ENCODE measurements at regions of chr3 and their contacts with region 1.

Region 1: DNA sequence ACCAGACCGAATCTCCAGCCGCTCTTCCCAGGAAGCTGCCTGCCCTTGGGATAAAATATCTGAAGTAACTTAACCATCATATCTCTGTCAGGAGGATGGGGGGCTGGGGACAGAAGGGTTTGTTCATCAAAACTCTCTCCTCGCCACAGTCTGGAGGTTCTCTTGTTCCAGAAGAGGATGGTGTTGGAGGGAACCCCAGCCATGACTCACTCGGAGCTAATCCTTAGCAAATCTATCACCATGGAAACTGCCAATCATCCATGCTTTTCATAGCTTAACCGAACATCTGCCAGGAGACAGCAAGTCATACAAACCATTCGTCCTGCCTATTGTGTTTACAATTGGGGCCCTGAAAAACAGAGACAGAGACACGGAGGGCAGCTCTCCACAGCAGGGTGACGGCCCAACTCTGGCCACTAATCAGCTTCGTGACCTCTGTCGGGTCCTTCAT is 73.7 kb upstream of the HEG1 start:
- DNase-seq: peak; percentile 29 to 94 (median 70)

Region 2: DNA sequence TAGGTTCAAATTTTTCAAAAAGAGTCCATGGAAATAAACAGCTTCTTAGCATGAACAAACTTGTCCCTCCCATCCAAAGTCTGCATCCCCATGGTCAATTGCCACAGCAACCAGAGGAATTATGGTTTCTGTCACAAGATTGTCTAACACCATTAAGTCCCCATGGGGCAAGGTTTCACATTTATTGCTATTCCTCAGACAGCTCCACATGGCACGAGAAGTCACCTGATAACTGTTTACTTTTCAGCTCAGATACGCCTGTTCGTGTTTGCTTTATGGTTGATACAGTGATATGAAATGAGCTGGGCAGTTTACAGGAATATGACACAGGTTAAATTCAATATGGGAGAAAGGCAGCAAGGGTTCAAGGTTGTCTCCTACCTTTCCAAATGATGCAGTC is 157.1 kb before region 1 on chr3:
- intact Hi-C with region 1: no loop called
- DNase-seq: no peak

Region 3: DNA sequence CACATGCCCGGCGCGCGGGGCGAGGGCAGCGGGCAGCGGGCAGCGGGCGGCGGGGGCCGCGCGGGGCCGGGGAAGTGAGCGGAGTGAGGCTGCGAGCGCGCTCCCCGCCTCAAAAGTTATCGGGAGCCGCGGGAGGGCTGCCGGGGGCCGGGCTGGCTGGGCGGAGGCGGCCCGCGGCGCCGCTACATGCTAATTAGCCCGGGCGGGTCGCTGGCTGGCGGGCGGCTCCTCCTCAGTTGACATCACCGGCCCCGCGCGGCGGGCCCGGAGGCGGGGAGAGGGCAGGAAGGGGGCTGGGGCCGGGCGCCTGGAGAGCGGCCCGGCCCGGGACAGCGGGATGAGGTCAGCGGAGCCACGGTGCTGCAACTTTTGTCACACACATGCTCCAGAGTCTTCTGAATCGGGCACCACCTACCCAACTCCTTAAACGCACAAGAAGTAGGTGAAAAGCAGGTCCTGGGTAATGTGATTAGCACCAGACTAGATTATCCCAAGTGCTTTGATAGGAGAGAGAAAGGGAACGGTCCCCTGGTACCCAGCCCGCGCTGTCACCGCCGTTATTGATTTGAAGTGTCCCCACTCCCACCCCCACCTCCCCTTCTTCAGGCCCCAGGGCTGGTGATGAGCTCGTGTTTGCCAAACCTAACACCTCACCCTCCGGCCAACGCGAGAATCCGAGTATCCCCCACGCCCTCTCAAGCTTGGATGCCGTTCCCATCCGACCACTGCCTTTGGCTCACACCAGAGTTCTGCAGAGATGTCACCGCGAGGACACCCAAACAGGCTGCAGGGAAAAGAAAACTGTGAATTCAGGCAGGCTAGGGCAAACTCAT is 73.4 kb before region 1 on chr3 and contains the start of gene HEG1:
- intact Hi-C with region 1: loop called (anchors 10 kb)
- DNase-seq: peak; percentile 49 to 93 (median 83)

Region 4: DNA sequence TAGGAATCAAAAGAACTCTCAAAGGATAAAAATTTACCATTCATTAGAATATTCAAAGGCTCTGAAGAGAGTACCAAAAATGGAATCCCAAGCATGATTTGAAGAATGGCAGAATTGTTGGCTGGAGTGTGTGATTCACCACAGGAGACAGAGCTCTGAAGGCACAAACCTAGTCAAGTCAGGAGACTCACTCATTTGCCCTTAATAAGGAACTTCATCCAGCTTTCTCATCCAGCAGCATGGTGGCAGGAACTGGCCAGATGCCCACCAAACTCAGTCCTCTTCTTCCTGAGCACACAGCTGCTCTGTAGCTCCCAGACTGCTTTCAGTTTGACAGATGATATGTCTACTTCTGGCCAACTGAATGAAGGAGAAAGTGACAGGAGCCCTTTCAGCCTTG is 57.2 kb before region 1 on chr3:
- intact Hi-C with region 1: no loop called
- DNase-seq: peak in 5 of 42 donors; percentile 11 to 57 (median 19)